ENCODE measurements at regions of chr5 and their contacts with region 1.

Region 1: DNA sequence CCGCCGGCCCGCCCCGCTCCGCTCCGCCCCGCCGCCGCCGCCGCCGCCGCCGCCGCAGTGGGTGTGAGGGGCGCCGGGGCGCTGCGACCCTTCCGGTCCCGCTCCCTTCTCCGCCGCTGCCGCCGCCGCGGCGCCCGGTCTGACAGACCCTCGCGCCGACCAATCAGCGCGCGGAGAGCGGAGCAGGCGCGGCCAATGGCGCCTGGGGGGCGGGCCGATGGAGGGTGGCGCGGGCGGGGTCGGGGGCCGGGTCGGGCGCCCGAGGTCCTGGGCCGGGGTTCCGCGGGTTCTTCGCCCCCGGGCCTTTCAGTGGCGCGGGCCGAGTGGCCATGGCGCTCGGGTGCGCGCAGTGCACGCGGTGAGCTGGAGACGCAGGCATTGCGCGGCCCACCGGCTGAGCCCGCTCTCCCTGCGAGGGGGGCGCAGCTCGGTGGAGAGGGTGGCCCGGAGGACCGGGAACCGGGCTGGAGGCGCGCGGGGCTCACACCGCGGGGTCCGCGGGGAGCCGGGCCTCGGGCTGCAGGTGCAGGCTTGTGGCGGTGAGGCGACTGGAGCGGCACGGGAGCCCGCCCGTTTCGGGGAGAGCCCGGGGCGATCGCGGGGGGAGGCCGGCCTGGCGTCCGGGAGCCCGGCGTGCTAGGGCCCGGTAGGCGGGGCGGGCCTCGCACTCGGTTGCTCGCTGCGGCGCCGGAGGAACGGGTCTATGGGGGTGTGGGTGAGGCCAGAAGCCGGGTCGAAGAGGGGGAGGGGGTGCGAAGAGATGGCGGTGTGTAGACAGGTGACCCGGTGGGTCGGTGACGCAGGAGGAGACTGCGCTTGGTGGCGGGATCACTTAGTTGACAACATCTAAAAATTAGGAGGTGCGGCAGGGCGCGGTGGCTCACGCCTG is at the start of gene MAPK9:
- DNase-seq: peak; percentile 84 to 95 (median 88)
- H3K4me3 ChIP-seq: peak within 1 kb of the TSS in 1 of 2 donors; percentile 74
- H3K4me3 Mint-ChIP-seq: peak within 1 kb of the TSS; percentile 95 to 100 (median 99)
- H3K27ac ChIP-seq: peak within 1 kb of the TSS; percentile 92
- H3K27ac Mint-ChIP-seq: peak within 1 kb of the TSS; percentile 94 to 100 (median 100)
- H3K4me1 ChIP-seq: peaks cover 34% of the 10 kb centered on the region
- H3K4me1 Mint-ChIP-seq: peaks cover 32 to 62% (median 47%) of the 10 kb centered on the region in 4 donors
- H3K27me3 ChIP-seq: no peaks in the 10 kb centered on the region
- H3K27me3 Mint-ChIP-seq: no peaks in the 10 kb centered on the region
- total RNA-seq, gene MAPK9: 39.1 TPM

Region 2: DNA sequence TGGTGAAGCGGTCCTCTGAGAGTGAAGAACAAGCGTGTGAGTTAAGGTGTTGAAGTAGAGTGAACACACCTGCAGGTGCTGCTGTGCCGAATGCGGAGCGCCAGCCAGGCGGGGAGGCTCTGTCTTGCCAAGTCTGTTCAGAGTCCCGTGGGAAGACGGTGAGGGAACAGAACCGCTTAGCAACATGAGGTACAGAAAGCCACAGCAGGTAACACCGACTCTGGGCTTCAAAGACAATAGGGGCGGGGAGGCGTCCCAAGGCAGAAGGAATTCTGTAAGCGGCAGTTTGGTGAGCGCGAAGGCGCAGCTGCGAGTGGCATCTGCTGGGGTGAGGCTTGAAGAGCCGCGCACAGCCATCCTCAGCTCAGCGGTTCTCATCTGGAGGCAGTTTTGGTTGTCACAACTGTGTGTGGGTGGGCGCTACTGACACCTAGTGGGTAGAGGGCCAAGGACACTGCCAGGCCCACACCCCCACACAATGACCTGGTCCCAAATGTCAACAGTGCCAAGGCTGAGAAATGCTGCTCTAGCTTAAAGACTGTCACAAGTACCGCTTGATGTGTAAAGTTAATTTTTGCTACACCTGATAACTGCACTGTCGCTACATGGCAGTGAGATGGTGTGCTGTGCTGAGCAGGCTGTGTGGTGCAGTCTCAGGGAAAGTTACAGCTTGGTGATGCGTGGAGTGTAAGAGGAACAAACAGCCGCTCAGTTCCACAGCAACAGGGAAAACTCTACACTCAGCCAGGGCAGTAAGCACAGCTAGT is 317.1 kb before region 1 on chr5:
- CTCF ChIA-PET with region 1: no interaction called
- POLR2A ChIA-PET with region 1: no interaction called
- intact Hi-C with region 1: no loop called
- DNase-seq: peak in 4 of 5 donors; percentile 3 to 17 (median 14)
- H3K4me3 ChIP-seq: no peak overlapping the region
- H3K4me3 Mint-ChIP-seq: no peak overlapping the region
- H3K27ac ChIP-seq: no peak overlapping the region
- H3K27ac Mint-ChIP-seq: no peak overlapping the region
- H3K4me1 ChIP-seq: no peaks in the 10 kb centered on the region
- H3K4me1 Mint-ChIP-seq: peaks cover 0 to 4% (median 3%) of the 10 kb centered on the region in 4 donors
- H3K27me3 ChIP-seq: no peaks in the 10 kb centered on the region
- H3K27me3 Mint-ChIP-seq: no peaks in the 10 kb centered on the region

Region 3: GRCh38 chr5:180274695-180275094 is 17.5 kb before region 1 on chr5:
- CTCF ChIA-PET with region 1: no interaction called
- POLR2A ChIA-PET with region 1: no interaction called
- intact Hi-C with region 1: no loop called
- DNase-seq: no peak
- H3K4me3 ChIP-seq: no peak overlapping the region
- H3K4me3 Mint-ChIP-seq: no peak overlapping the region
- H3K27ac ChIP-seq: no peak overlapping the region
- H3K27ac Mint-ChIP-seq: no peak overlapping the region
- H3K4me1 ChIP-seq: no peaks in the 10 kb centered on the region
- H3K4me1 Mint-ChIP-seq: peaks cover 0 to 3% (median 0%) of the 10 kb centered on the region in 4 donors
- H3K27me3 ChIP-seq: no peaks in the 10 kb centered on the region
- H3K27me3 Mint-ChIP-seq: no peaks in the 10 kb centered on the region

Region 4: DNA sequence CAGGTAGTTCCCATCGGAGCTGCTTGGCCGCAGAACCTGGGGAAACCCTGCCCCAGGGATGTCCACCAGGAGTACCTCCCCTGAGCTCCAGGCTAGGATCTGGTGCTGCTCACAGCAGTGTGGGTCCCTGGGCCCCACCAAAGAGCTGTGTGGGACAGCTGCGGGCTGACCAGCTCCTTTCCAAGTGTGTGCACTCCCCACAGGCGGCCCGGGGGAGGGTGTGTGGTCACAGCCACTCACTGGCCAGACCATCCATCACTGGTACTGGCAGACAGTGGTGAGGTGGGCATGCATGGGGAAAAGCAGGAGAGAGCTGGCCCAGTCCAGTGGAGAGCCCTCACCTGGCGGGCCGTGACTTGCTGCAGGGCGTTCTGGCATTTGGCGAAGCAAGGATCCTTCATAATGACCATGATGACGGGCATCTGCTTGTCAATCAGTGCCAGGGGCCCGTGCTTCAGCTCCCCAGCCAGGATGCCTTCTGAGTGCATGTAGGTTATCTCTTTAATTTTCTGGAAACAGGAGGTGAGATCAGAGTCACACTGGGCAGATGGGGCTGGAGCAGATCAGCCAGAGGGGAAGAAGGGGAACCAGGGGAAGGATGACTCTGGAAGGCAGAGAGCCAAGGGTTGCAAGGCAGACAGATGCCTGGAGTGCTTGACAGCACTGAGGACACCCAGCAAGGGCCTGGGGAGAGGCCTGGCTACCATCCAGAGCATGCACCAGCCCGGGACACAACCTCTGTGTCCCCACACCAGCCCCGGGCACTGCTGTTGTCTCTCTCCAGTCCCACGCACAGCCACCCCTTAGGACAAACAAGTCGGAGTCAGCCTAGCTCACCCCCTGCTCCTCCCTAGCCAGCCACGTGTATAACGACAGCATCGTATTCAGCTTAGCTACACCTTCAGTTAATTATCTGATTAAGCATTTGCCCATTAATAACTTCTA is 12.5 kb after region 1 on chr5:
- CTCF ChIA-PET with region 1: interaction called, 25 read pairs
- POLR2A ChIA-PET with region 1: interaction called, 4 read pairs
- intact Hi-C with region 1: no loop called
- DNase-seq: no peak
- H3K4me3 ChIP-seq: no peak overlapping the region
- H3K4me3 Mint-ChIP-seq: no peak overlapping the region
- H3K27ac ChIP-seq: no peak overlapping the region
- H3K27ac Mint-ChIP-seq: peak overlapping the region in 1 of 7 donors; percentile 60
- H3K4me1 ChIP-seq: no peaks in the 10 kb centered on the region
- H3K4me1 Mint-ChIP-seq: no peaks in the 10 kb centered on the region
- H3K27me3 ChIP-seq: no peaks in the 10 kb centered on the region
- H3K27me3 Mint-ChIP-seq: peaks cover 0 to 6% of the 10 kb centered on the region in 2 donors

Region 5: GRCh38 chr5:180328296-180329137 is 36.3 kb after region 1 on chr5:
- CTCF ChIA-PET with region 1: interaction called, 58 read pairs
- POLR2A ChIA-PET with region 1: interaction called, 15 read pairs
- intact Hi-C with region 1: loop called (anchors 1 kb)
- DNase-seq: peak; percentile 73 to 83 (median 77)
- H3K4me3 ChIP-seq: no peak overlapping the region
- H3K4me3 Mint-ChIP-seq: no peak overlapping the region
- H3K27ac ChIP-seq: no peak overlapping the region
- H3K27ac Mint-ChIP-seq: no peak overlapping the region
- H3K4me1 ChIP-seq: no peaks in the 10 kb centered on the region
- H3K4me1 Mint-ChIP-seq: peaks cover 0 to 5% (median 0%) of the 10 kb centered on the region in 4 donors
- H3K27me3 ChIP-seq: no peaks in the 10 kb centered on the region
- H3K27me3 Mint-ChIP-seq: peaks cover 4 to 8% of the 10 kb centered on the region in 2 donors

Region 6: DNA sequence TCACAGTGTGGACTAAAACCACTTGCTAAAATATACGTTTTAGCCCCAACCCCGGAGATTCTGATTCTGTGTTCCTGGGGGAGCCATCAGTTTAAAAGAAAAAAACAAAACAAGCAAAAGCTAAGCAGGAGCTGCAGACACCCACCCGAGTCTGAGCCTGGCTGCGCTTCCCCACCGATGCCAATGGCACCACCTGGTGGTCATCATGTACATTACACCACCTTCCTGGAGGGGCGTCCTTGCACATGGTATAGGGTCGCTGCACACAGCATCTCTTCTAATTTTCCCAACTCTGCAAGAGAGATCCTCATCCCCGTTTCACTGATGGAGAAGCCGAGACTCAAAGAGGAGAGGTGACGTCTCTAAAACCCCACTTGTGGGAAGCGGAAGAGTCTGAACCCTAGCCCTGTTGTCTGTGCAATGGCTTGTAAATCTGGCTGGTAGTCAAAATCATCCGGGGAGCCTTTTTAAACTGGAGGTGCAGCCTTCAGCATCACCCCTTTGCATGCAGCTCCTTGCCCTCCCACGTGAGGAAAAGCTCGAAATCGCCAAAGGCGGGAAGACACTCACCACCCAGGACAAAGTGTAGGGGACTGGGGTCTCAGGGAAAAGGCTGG is 178.9 kb after region 1 on chr5:
- CTCF ChIA-PET with region 1: interaction called, 11 read pairs
- POLR2A ChIA-PET with region 1: no interaction called
- intact Hi-C with region 1: no loop called
- DNase-seq: peak in 4 of 5 donors; percentile 40 to 53 (median 44)
- H3K4me3 ChIP-seq: no peak overlapping the region
- H3K4me3 Mint-ChIP-seq: no peak overlapping the region
- H3K27ac ChIP-seq: no peak overlapping the region
- H3K27ac Mint-ChIP-seq: no peak overlapping the region
- H3K4me1 ChIP-seq: no peaks in the 10 kb centered on the region
- H3K4me1 Mint-ChIP-seq: peaks cover 0 to 2% (median 0%) of the 10 kb centered on the region in 4 donors
- H3K27me3 ChIP-seq: no peaks in the 10 kb centered on the region
- H3K27me3 Mint-ChIP-seq: peaks cover 2 to 4% of the 10 kb centered on the region in 2 donors

Measured in CD4-positive, alpha-beta memory T cell (primary cell).